Head of caudate nucleus (tissue), 42 donors: ENCODE measurements at regions of chr17 and their contacts with region 1.

Region 1: DNA sequence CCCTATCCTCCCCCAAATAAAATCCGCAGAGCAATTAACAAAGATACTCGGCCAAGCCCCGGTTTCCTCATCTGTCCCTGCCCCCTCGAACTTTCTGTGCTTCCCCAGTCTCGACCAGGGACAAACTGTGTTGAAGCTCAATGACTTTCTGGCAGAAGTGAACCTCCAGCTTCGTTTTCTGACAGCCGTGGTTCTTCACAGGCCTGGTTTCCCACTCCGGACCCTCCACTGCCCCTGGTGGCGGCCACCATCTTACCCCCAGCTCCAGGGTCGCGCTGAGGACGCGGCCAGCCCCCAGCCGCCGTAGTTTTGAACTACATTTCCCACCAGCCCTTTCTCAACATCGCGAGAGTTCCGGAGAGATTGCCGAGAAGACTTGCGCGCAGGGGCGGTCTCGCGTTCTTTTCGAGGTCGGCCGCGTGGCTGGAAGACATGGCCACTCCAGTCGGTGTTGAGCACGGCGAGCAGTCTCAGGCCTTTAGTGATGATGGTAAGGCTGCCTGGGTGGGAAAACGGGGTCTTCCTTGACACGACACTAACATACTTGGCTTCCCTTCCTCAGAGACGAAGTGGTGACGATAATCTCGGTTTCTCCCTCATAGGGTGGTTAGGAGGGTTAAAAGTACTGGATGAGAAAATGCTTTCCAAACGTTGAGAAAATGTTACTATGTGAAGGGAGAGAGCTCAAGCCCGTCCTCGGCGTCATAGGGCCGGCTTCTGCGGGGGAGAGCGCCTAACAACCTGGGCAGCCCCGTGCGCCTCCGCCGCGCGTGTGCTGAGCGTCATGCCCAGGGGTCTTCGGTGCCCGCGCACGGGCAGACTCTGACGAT is 17.7 kb downstream of the PRCD start:
- DNase-seq: peak; percentile 85 to 98 (median 93)

Region 2: GRCh38 chr17:76481071-76481655 is 76.4 kb before region 1 on chr17:
- intact Hi-C with region 1: no loop called
- DNase-seq: peak in 33 of 42 donors; percentile 20 to 72 (median 50)

Region 3: GRCh38 chr17:76515274-76515949 is 42.2 kb before region 1 on chr17:
- intact Hi-C with region 1: no loop called
- DNase-seq: peak in 6 of 42 donors; percentile 14 to 66 (median 48)

Region 4: DNA sequence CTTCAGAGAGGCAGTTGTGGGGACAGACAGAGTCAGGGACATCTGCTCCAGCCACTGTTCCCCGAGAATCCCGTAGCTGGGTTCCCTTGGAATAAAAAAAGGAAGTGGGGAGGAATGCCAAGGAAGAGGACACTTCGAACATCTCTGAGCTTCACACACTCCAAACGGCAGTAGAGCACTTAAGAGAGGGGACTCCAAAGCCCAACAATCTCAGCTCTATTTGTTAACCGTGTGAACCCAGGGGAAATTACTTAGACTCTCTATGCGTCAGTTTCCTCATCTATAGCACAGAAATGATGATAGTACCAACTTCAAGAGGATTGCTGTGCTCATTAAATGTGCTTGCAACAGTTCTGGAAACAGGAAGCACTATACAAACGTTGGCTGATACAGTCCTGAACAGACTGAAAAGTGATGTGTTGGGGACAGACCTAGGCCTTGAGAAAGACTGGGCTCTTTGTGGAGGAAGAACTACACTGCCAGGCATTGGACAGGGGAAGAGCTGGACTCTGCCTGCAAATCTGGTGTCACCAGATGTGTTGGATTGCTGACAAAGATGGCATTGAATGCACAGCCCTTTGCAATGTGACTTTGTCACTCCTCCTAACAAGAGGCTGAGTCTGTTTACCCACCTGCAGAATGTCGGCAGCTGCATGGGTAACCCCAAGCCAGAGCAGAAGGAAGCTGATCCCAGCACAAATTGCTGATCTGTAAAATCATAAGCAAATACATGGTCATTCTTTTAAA is 40.3 kb after region 1 on chr17:
- intact Hi-C with region 1: no loop called
- DNase-seq: peak in 37 of 42 donors; percentile 17 to 82 (median 51)

Region 5: GRCh38 chr17:76623271-76624146 is 65.9 kb after region 1 on chr17:
- intact Hi-C with region 1: loop called (anchors 10 kb)
- DNase-seq: peak; percentile 42 to 92 (median 80)

Region 6: DNA sequence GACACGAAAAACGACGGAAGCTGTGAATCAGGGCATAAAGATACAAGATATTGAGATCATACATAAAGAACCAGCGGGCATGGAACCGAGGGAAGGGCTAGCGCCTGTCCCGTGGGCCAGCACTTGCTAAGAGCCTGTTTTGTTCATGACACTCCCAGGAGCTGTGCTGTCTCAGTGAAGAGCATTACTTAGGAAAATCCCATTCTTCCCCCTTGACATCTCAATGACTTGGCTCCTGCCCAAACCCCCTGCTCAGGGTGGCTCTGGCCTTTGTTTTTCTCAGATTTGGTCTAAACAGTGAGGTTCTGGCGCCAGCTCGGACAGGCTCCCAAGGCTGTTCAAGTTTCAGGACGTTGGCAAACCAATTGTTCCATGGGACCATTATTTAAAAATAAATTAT is 504.1 kb after region 1 on chr17:
- intact Hi-C with region 1: no loop called
- DNase-seq: no peak